ENCODE measurements at regions of chr2 and their contacts with region 1.

Region 1: DNA sequence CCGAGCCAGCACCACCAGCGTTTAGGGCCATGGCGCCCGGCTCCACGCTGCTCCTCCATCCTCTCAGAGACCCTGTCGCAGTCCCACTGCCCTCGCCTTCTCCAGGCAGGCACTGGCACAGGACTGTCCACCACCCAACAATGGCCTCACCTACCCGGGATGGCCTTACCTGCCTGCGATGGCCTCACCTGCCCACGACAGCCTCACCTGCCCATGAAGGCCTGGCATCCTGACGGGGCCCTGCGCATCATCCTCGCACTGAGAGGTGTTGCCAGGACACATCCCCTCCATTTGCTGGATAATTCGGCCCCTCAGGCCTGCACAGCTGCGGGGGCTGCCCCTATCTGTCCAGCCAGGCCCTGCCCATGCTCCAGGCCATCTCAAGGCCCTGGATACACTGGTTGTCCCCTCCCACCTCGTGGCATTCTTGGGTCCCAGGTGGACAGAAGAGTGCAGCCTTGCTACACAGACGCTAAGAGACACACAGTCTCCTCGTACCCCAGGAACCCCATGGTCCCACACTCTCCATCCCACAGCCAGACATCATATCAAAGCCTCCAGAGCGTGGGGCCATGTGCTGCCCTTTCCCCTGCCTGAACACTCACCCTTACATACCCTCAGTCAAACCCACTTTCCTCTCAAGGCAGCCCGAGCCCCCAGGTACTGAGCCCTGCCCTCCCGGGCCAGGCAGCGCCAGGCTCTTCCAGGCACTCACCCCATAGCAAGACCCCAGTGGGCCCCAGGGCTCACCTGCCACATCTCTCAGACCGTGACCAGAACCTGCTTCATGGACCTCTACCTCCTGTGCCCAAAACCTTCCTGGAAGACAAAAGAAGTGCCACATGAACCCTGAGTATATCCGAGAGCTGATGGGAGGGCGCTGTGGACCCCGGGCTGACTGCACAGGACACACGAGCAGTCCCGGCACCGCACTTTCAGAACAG is 268.6 kb downstream of the EIPR1 start:
- DNase-seq: no peak
- ATAC-seq: peak in 1 of 4 experiments; percentile 15
- H3K4me3 ChIP-seq: no peak overlapping the region
- H3K4me3 Mint-ChIP-seq: no peak overlapping the region
- H3K27ac ChIP-seq: no peak overlapping the region
- H3K27ac Mint-ChIP-seq: no peak overlapping the region
- H3K4me1 ChIP-seq: no peaks in the 10 kb centered on the region
- H3K4me1 Mint-ChIP-seq: no peaks in the 10 kb centered on the region
- H3K27me3 ChIP-seq: peaks cover 0 to 3% of the 10 kb centered on the region in 2 experiments
- H3K27me3 Mint-ChIP-seq: peaks cover 0 to 6% of the 10 kb centered on the region in 2 donors

Region 2: DNA sequence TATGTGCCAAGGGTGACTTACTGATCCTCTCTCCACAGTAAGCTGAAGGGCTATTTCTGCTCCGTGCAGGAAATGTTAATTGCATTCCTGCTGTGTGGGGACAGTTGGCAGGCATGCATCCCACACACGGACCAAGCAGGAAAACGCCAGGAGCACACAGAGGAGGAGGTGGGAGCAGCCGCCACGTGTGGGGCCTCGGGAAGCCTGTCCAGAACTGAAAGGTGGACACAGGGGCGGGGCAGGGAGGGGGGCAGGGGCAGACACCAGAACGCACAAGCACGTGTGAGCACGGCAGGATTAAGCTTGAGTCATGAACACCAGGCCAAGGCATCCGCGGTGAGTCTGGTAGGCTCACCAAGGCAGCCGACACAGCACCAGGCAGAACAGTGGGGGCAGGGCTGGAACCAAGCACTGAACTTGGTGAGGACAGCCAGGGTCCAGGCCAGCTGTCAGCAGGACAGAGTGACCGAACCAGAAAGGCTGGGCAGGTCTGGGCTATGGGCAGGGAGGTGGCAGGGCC is 91.4 kb after region 1 on chr2:
- CTCF ChIA-PET with region 1: interaction called in 1 of 2 experiments, 12 read pairs
- POLR2A ChIA-PET with region 1: no interaction called
- DNase-seq: no peak
- ATAC-seq: no peak
- H3K4me3 ChIP-seq: no peak overlapping the region
- H3K4me3 Mint-ChIP-seq: no peak overlapping the region
- H3K27ac ChIP-seq: no peak overlapping the region
- H3K27ac Mint-ChIP-seq: no peak overlapping the region
- H3K4me1 ChIP-seq: peaks cover 0 to 24% of the 10 kb centered on the region in 2 experiments
- H3K4me1 Mint-ChIP-seq: peaks cover 5 to 10% (median 6%) of the 10 kb centered on the region in 3 donors
- H3K27me3 ChIP-seq: no peaks in the 10 kb centered on the region
- H3K27me3 Mint-ChIP-seq: no peaks in the 10 kb centered on the region

Region 3: GRCh38 chr2:3465844-3466481 is 356.9 kb after region 1 on chr2:
- CTCF ChIA-PET with region 1: no interaction called
- POLR2A ChIA-PET with region 1: no interaction called
- DNase-seq: no peak
- ATAC-seq: no peak
- H3K4me3 ChIP-seq: no peak overlapping the region
- H3K4me3 Mint-ChIP-seq: no peak overlapping the region
- H3K27ac ChIP-seq: no peak overlapping the region
- H3K27ac Mint-ChIP-seq: no peak overlapping the region
- H3K4me1 ChIP-seq: peaks cover 6 to 8% of the 10 kb centered on the region in 2 experiments
- H3K4me1 Mint-ChIP-seq: peaks cover 9 to 10% (median 9%) of the 10 kb centered on the region in 3 donors
- H3K27me3 ChIP-seq: no peaks in the 10 kb centered on the region
- H3K27me3 Mint-ChIP-seq: no peaks in the 10 kb centered on the region